ENCODE measurements at regions of chr3 and their contacts with region 1.

Region 1: DNA sequence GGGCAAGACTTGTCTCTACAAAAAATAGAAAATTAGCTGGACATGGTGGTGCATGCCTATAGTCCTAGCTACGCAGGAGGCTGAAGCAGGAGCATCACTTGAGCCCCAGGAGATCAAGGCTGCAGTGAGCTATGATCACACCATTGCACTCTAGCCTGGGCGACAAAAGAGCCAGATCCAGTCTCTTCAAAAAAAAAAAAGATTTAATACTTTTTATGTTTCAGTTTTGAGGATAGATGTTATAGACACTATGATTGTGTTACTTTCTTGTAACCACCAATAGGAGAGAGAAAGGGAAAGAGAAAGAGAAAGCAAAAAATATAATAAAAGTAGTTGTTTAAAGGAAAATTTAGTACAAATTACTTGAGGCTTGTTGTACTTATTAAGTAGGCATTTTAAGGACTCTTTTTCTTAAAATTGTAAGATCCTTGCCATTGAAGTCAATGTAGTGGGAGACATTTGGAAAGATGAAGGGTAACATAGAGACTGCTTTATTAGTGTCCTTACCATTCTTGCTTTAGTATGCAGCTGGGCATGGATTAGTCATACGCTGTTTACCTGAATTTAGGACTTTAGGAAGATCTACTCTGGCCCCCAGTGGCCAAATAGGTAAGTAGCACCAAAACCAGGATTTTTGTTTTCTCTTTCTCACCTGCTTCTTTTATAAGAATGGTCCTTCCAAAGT is 35.1 kb upstream of the ZDHHC23 start:
- DNase-seq: no peak
- ATAC-seq: peak in 1 of 8 donors; percentile 51
- H3K4me3 ChIP-seq: no peak overlapping the region
- H3K27ac ChIP-seq: no peak overlapping the region
- H3K4me1 ChIP-seq: no peaks in the 10 kb centered on the region
- H3K27me3 ChIP-seq: peaks cover 0 to 4% (median 0%) of the 10 kb centered on the region in 7 donors
- CTCF ChIP-seq: peak in 8 of 9 donors; percentile 6 to 55 (median 50)

Region 2: GRCh38 chr3:113736548-113737089 is 176.1 kb before region 1 on chr3:
- intact Hi-C with region 1: loop called in 1 of 10 experiments (anchors 5 kb)
- DNase-seq: peak in 1 of 2 donors; percentile 26
- ATAC-seq: peak in 7 of 8 donors; percentile 55 to 83 (median 74)
- H3K4me3 ChIP-seq: no peak overlapping the region
- H3K27ac ChIP-seq: peak overlapping the region in 2 of 10 donors; percentile 0 to 6
- H3K4me1 ChIP-seq: peaks cover 0 to 43% (median 36%) of the 10 kb centered on the region in 9 donors
- H3K27me3 ChIP-seq: no peaks in the 10 kb centered on the region
- CTCF ChIP-seq: peak; percentile 52 to 80 (median 73)

Region 3: DNA sequence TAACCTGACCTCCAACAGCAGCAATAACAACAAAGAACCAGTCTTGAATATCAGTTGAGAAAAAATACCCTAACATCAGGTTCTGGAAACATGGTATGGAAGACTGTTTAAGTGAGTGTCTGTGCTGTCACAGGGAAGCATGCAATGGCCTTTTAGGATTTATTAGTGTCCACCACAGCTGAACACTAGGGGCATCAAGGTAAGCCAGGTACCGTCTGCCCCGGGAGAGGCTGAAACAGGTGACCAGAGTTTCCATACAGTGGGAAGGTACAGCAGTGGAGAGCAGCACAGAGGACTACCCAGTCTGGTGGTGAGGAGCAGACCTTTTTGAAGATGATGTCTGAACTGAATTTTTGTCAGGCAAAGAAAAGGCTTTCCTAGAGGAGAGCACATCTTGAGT is 53.5 kb after region 1 on chr3:
- intact Hi-C with region 1: no loop called
- DNase-seq: no peak
- ATAC-seq: no peak
- H3K4me3 ChIP-seq: no peak overlapping the region
- H3K27ac ChIP-seq: no peak overlapping the region
- H3K4me1 ChIP-seq: no peaks in the 10 kb centered on the region
- H3K27me3 ChIP-seq: no peaks in the 10 kb centered on the region
- CTCF ChIP-seq: no peak

Measured in heart right ventricle (tissue), 16 donors.